A673 (cell line): ENCODE measurements at regions of chr10 and their contacts with region 1.

Region 1: DNA sequence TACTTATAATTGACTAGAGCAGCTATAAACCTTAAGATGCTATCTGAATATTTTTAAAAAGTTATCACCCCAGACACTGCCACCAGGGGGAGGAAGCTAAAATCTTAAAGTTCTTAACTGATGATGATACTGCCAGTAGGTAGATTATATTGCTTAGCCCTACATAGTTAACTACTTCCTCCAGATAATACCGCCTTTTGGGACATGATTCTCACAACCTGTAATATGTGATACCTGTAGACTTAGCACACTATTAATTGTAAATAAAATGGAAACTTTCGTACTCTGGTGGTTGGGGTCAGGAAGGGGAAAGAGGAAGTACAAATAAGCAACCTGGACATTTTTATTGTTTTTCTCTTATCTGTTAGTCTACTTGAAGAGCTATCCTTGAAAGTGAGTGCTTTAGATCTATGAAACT is 268.9 kb downstream of the ADK start:
- DNase-seq: peak; percentile 87
- H3K4me3 ChIP-seq: no peak overlapping the region
- H3K27ac ChIP-seq: peak overlapping the region; percentile 83
- H3K4me1 ChIP-seq: peaks cover 41% of the 10 kb centered on the region
- H3K27me3 ChIP-seq: no peaks in the 10 kb centered on the region
- CTCF ChIP-seq: peak; percentile 81

Region 2: DNA sequence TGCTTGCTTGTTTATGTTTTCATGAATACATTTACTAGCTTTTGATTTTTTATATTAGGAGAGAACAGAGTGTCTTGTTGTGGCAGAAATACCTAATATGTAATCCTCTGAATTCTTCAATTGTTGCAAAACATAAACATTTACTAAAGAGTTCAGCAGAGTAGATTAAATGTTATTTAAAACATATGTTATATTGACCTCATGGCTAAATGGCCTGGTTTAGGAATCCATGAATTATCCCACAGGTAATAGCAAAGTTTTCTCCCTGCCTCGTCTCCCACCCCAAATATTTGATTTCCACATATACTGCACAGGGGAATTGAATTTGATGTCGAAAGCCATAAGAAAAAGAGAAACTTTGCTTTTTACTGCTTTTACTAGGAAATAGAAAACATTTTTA is 157.1 kb before region 1 on chr10:
- CTCF ChIA-PET with region 1: no interaction called
- POLR2A ChIA-PET with region 1: no interaction called
- intact Hi-C with region 1: loop called (anchors 1 kb)
- DNase-seq: no peak
- H3K4me3 ChIP-seq: no peak overlapping the region
- H3K27ac ChIP-seq: no peak overlapping the region
- H3K4me1 ChIP-seq: peaks cover 6% of the 10 kb centered on the region
- H3K27me3 ChIP-seq: no peaks in the 10 kb centered on the region
- CTCF ChIP-seq: no peak

Region 3: GRCh38 chr10:74813381-74814259 is 393.7 kb after region 1 on chr10:
- CTCF ChIA-PET with region 1: no interaction called
- POLR2A ChIA-PET with region 1: no interaction called
- intact Hi-C with region 1: no loop called
- DNase-seq: no peak
- H3K4me3 ChIP-seq: no peak overlapping the region
- H3K27ac ChIP-seq: no peak overlapping the region
- H3K4me1 ChIP-seq: no peaks in the 10 kb centered on the region
- H3K27me3 ChIP-seq: no peaks in the 10 kb centered on the region
- CTCF ChIP-seq: no peak